Endothelial cell of umbilical vein (primary cell): ENCODE measurements at regions of chr22 and their contacts with region 1.

Region 1: DNA sequence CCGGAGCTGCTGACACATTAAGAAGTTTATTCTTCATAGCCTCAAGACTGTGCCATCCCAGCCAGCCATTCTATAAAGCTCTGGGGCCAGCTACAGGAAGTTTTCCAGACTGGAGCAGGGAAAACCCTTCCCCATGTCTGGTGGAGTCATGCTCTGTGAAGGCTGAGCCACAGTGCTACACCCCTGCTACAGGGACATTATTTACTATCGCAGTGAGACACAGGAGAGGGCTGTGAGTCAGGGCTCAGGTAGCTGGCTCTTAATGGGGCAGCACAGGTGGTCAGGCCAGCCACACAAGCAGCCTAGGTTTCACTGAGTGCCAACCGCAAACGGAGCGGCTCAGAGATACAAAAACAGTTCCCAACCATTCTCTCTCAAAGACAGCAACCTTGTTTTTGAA is 12.1 kb downstream of the HPS4 start:
- DNase-seq: peak; percentile 92
- H3K4me3 ChIP-seq: no peak overlapping the region
- H3K27ac ChIP-seq: peak overlapping the region; percentile 87
- H3K4me1 ChIP-seq: peaks cover 28% of the 10 kb centered on the region
- H3K27me3 ChIP-seq: no peaks in the 10 kb centered on the region
- CTCF ChIP-seq: no peak
- POLR2A ChIP-seq: no peak

Region 2: DNA sequence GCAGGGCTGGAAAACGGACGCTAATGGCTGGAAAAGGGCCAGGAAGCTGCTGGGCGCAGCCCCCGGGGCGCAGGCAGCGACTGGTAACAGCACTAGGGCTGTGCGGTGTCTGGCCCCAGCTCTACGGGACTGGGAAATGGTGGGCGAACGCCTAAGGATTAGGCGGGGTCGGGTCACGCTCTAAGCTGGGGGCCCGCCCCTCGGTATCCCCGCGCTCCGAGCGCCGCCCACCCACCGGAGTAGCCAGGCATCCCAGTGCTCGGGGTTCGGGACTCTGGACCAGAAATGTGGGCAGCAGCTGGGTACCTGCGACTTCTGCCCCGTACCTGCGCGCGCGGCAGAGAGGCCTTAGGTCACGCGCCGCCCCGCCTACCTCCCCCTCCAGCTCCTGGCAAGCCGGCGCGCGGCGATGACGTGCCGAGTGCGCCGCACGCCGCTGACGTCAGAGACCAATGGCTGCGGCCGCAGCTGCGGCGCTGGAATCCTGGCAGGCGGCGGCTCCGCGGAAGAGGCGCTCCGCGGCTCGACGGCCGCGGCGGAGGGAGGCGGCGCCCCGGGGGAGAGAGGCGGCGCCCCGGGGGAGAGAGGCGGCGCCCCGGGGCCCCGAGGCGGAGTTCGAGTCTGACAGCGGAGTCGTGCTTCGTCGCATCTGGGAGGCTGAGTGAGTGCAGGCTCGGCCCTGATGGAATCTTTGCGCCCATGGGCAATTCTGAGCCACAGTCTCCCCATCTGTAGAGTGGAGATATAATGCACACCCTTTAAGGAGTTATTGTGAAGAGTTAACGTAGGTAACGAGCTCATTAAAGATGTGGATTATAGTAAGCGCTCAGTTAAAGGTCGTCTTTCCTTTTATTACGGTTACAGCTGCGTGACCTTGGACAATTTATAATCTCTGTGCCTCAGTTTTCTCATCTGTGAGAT is 12.2 kb after region 1 on chr22 and contains the starts of genes HPS4 and SRRD:
- CTCF ChIA-PET with region 1: interaction called, 10 read pairs
- POLR2A ChIA-PET with region 1: no interaction called
- dilution Hi-C with region 1: no loop called
- intact Hi-C with region 1: no loop called
- DNase-seq: peak; percentile 89
- H3K4me3 ChIP-seq: peak within 1 kb of the TSS; percentile 80 to 97 (median 92)
- H3K27ac ChIP-seq: peak within 1 kb of the TSS; percentile 86
- H3K4me1 ChIP-seq: peaks cover 23% of the 10 kb centered on the region
- H3K27me3 ChIP-seq: no peaks in the 10 kb centered on the region
- CTCF ChIP-seq: no peak
- POLR2A ChIP-seq: peak; percentile 83
- total RNA-seq, gene HPS4: 29.7 and 34.9 TPM in 2 replicates
- total RNA-seq, gene SRRD: 24.2 and 28.5 TPM in 2 replicates

Region 3: GRCh38 chr22:26502688-26503561 is 31.4 kb after region 1 on chr22:
- CTCF ChIA-PET with region 1: interaction called, 5 read pairs
- POLR2A ChIA-PET with region 1: interaction called, 3 read pairs
- dilution Hi-C with region 1: no loop called
- intact Hi-C with region 1: loop called (anchors 1 kb)
- DNase-seq: peak; percentile 64
- H3K4me3 ChIP-seq: no peak overlapping the region
- H3K27ac ChIP-seq: peak overlapping the region; percentile 39
- H3K4me1 ChIP-seq: peaks cover 27% of the 10 kb centered on the region
- H3K27me3 ChIP-seq: no peaks in the 10 kb centered on the region
- CTCF ChIP-seq: peak; percentile 63 to 76
- POLR2A ChIP-seq: no peak